ENCODE measurements at regions of chr7 and their contacts with region 1.

Region 1: DNA sequence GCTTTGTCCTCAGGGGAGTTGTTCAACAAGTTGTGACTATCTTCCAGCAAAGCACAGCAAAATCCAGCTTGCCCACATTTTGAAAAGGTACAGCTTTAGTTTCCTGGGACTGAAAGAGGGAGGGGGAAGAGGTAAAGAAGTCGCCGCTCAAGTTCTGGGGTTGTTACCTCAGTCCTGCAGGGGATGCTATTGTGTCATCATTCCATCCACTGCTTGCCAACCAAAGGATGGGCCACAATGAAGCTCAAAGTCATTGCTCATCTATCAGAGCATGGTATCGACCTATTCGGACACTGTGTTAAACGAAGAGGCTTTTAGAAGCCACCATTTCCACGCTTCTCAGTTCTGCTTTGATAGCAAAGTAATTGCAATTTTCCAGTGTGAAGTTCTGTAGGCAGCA is 34.3 kb downstream of the NPY start:
- DNase-seq: peak in 1 of 35 experiments; percentile 1
- ATAC-seq: no peak
- H3K4me3 ChIP-seq: no peak overlapping the region
- H3K4me3 Mint-ChIP-seq: no peak overlapping the region
- H3K27ac ChIP-seq: no peak overlapping the region
- H3K27ac Mint-ChIP-seq: no peak overlapping the region
- H3K4me1 ChIP-seq: no peaks in the 10 kb centered on the region
- H3K4me1 Mint-ChIP-seq: no peaks in the 10 kb centered on the region
- H3K27me3 ChIP-seq: peaks cover 0 to 5% of the 10 kb centered on the region in 2 experiments
- H3K27me3 Mint-ChIP-seq: peaks cover 15 to 24% of the 10 kb centered on the region in 2 donors

Region 2: DNA sequence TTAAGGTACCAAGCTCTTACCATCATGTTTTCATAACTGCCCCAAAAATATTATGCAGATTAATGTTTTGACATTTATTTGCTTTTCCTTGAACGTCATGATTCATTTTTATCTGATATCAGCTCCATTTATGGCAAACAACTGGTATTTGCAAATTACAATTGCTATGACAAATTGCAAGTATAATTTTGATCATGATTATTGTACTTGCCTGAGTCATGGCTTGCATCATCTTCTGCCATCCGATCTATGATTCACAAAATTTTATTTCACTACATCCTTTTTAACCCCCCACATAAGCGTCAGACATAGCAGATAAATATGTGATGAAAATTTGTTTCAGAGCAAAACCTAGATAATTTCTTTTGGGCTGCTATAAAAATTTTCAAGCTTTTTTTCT is 453.3 kb before region 1 on chr7:
- CTCF ChIA-PET with region 1: interaction called in 1 of 2 experiments, 11 read pairs
- POLR2A ChIA-PET with region 1: no interaction called
- DNase-seq: no peak
- ATAC-seq: no peak
- H3K4me3 ChIP-seq: no peak overlapping the region
- H3K4me3 Mint-ChIP-seq: no peak overlapping the region
- H3K27ac ChIP-seq: no peak overlapping the region
- H3K27ac Mint-ChIP-seq: no peak overlapping the region
- H3K4me1 ChIP-seq: no peaks in the 10 kb centered on the region
- H3K4me1 Mint-ChIP-seq: no peaks in the 10 kb centered on the region
- H3K27me3 ChIP-seq: peaks cover 0 to 2% of the 10 kb centered on the region in 2 experiments
- H3K27me3 Mint-ChIP-seq: peaks cover 12 to 20% of the 10 kb centered on the region in 2 donors

Region 3: DNA sequence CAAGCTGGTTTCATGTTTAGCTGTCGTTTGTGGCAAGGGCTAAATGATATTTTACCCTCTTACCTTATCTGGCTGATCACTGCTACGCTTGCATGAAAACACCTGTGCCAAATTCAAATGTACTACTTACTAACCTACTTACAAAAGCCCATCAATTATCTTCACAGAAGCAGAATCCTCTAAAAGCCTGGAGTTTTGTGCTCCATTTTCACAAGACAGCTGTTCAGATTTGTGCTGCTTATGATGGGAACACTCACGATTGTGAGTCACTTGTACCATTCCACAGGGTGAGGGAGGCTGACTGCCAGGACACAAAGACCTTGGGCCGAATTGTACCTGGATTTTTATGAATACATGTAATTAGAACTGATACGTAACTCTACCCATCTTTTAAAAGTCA is 279.3 kb before region 1 on chr7:
- CTCF ChIA-PET with region 1: no interaction called
- POLR2A ChIA-PET with region 1: no interaction called
- DNase-seq: no peak
- ATAC-seq: no peak
- H3K4me3 ChIP-seq: no peak overlapping the region
- H3K4me3 Mint-ChIP-seq: no peak overlapping the region
- H3K27ac ChIP-seq: no peak overlapping the region
- H3K27ac Mint-ChIP-seq: no peak overlapping the region
- H3K4me1 ChIP-seq: no peaks in the 10 kb centered on the region
- H3K4me1 Mint-ChIP-seq: peaks cover 8 to 9% (median 9%) of the 10 kb centered on the region in 3 donors
- H3K27me3 ChIP-seq: no peaks in the 10 kb centered on the region
- H3K27me3 Mint-ChIP-seq: peaks cover 0 to 5% of the 10 kb centered on the region in 2 donors

Measured in T-cell (primary cell).